ENCODE measurements at regions of chr14 and their contacts with region 1.

Region 1: GRCh38 chr14:50785457-50786063 is 45.4 kb downstream of the NIN start:
- DNase-seq: peak; percentile 65
- H3K4me3 Mint-ChIP-seq: peak overlapping the region; percentile 56
- H3K27ac Mint-ChIP-seq: peak overlapping the region; percentile 78
- H3K4me1 Mint-ChIP-seq: peaks cover 48% of the 10 kb centered on the region
- H3K27me3 Mint-ChIP-seq: no peaks in the 10 kb centered on the region

Region 2: GRCh38 chr14:50520947-50521815 is 264.4 kb before region 1 on chr14:
- intact Hi-C with region 1: no loop called
- DNase-seq: peak; percentile 77
- H3K4me3 Mint-ChIP-seq: peak overlapping the region; percentile 67
- H3K27ac Mint-ChIP-seq: peak overlapping the region; percentile 94
- H3K4me1 Mint-ChIP-seq: peaks cover 39% of the 10 kb centered on the region
- H3K27me3 Mint-ChIP-seq: no peaks in the 10 kb centered on the region

Region 3: DNA sequence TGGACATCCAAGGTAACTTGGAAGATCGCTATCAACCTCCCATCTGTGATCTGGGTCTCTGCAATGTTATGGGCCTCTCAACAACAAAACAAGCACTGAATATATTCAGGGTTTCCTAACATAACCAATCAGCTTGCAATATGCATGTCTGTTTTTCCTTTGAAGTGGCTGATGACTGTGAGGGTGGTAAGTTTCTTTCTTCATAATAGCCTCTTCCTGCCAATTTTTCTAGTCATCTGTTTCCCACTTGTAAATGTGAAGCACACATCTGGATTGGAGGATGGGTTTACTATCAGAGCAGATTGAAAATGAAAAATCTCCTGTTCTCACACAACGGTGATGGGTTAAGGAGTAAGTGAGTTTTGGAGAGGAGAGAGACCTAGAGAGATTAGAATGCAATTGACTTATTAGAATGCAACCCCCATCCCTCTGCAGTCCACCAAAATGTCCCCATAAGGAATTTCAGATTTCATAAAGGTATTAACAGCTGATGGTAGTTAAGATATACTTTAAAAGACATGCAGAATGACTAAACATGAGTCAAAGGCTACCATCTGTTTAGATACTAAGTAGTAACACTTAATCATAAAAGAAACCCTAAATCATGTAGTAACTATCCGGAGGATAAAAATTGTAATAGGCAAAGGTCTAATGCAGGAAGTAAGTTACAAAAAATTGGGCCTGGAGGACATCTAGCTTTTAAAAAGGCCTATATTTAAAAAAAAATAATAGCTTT is 59.0 kb before region 1 on chr14:
- intact Hi-C with region 1: no loop called
- DNase-seq: peak; percentile 84
- H3K4me3 Mint-ChIP-seq: peak overlapping the region; percentile 51
- H3K27ac Mint-ChIP-seq: peak overlapping the region; percentile 88
- H3K4me1 Mint-ChIP-seq: peaks cover 24% of the 10 kb centered on the region
- H3K27me3 Mint-ChIP-seq: no peaks in the 10 kb centered on the region

Region 4: GRCh38 chr14:50823051-50823761 is 37.6 kb after region 1 on chr14:
- intact Hi-C with region 1: loop called (anchors 2 kb)
- DNase-seq: no peak
- H3K4me3 Mint-ChIP-seq: peak overlapping the region; percentile 77
- H3K27ac Mint-ChIP-seq: peak overlapping the region; percentile 87
- H3K4me1 Mint-ChIP-seq: peaks cover 64% of the 10 kb centered on the region
- H3K27me3 Mint-ChIP-seq: no peaks in the 10 kb centered on the region

Region 5: DNA sequence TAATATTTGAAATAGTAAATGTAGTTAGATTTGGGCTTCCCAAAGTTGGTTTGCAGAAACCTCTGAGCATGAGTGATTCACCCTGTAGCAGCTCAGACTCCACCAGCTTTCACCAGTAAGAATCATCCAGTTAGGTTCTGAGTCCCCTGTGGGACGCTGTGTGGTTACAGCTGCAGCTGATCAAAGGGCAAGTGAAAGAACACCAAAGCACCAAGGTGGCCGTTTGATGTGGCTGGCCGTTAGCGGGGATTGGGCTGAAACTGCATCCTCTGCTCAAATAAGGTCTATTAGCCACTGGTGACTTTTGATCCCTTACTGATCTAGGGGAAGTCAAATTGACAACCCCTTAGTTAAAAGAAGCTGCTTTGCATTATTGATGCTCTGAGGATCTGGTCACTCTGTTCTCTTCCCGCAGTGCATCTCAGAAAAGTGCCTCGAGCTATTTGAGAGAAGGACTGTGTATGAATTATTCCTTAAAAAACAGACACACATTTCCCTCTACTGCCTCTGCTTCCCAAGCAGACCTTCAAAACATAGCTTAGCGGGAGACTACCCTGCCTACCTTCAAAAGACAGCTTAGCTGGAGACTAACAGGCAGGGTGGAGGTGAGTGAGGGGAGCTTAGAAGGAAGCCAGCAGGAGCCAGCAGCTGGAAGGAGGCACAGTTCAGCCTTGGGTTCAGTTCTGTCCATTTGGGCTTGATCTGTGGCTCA is 90.0 kb after region 1 on chr14:
- intact Hi-C with region 1: loop called (anchors 5 kb)
- DNase-seq: peak; percentile 89
- H3K4me3 Mint-ChIP-seq: peak overlapping the region; percentile 20
- H3K27ac Mint-ChIP-seq: no peak overlapping the region
- H3K4me1 Mint-ChIP-seq: peaks cover 20% of the 10 kb centered on the region
- H3K27me3 Mint-ChIP-seq: peaks cover 82% of the 10 kb centered on the region